ENCODE measurements at regions of chr20 and their contacts with region 1.

Region 1: DNA sequence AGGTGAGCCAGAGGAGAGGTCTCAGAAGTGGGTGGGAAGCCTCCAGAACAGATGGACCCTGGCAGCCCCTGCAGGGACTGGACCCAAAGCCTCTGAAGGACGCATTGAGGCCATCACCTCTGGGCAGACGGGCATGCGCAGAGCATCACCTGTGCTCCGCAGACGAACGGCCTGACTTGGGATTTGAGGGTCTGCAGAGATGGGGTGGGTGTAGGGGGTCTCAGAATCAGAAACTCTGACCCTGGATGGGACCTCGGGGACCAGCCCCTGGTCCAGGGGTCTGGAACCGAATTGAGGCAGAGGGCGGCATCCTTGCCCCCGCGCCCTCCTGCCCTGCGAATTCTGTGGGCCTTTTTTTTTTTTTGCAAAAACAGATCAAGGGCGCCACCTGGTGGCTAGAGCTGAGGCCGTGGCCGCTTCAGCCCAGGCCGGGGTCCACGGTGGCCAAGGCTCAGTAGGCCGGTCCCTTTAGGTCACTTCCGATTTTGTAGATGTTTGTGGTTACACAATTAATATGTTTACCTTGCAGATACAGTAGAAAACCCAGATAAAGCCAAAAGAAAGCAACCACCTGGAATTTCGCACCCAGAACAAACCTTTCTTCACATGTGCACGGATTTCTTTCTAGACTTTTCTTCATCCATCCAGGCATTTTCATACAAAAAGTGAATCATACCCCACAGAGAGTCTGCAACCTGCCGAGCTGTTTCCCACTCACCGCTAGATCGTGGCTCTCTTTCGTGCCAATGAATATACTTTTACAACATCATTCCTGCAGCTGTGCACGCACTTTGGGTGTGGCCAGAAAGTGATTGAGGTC is 25.9 kb downstream of the ZBP1 start:
- DNase-seq: peak; percentile 47
- H3K4me3 ChIP-seq: no peak overlapping the region
- H3K27ac ChIP-seq: no peak overlapping the region
- H3K4me1 ChIP-seq: no peaks in the 10 kb centered on the region
- H3K27me3 ChIP-seq: no peaks in the 10 kb centered on the region; the same call in 1 of the 2 replicates

Region 2: DNA sequence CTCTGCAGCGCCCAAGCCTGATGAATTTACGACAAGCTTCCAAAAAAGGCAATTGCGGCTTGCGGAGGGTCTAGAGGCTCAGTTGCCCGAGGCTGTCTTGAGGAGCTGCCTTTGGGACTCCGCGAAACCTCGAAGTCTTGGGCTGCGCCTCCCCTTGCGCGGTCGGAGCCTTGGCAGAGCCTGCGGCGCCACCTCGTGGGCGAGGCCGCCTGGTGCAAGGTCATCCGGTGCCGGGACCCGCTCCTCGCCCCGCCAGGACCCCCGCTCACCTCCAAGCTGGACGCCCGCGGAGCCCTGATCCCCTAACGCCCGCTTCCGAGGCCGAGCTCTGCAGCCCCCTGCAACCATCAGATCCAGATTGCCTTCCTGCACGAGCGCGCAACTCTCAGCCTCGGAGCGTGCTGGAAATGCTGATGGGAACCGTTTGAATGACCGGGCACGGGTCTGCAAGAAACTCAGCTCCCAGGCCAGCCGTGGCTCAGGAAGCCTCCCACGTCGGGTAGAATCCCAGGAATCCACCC is 1250.4 kb before region 1 on chr20:
- in situ Hi-C with region 1: no loop called
- DNase-seq: peak; percentile 75
- H3K4me3 ChIP-seq: peak overlapping the region; percentile 61
- H3K27ac ChIP-seq: no peak overlapping the region
- H3K4me1 ChIP-seq: no peaks in the 10 kb centered on the region
- H3K27me3 ChIP-seq: peaks cover 33% of the 10 kb centered on the region

Region 3: DNA sequence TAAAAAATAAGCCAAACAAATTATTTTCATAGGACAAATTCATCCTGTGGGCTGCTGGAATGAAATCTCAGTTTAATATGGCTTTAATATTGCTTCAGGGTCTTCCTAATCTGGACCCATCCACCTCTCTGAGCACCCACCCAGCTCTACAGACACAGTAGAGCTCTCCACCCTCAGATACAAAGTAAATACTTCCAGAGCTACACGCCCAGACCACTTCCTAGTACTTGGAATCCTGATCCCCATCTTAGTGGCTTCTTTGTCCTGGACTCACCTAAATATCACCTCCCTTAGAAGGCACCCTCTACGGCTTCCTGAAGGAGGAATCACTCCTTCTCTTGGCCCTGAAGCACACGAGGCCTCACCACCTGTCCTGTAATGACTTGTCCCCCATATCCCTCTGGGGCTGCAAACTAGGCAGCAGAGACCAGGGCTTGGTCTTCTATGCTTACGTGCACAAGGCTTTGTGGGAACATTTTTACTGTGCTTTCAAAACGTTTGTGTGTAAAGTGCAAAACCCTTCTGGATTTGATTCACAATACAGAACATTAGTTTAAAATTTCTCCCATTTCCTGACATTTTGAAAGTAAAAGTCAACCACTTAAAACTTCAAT is 71.8 kb before region 1 on chr20:
- in situ Hi-C with region 1: loop called (anchors 5 kb)
- DNase-seq: no peak
- H3K4me3 ChIP-seq: no peak overlapping the region
- H3K27ac ChIP-seq: no peak overlapping the region
- H3K4me1 ChIP-seq: no peaks in the 10 kb centered on the region
- H3K27me3 ChIP-seq: peaks cover 36% of the 10 kb centered on the region

Region 4: GRCh38 chr20:58293453-58293852 is 699.2 kb after region 1 on chr20:
- in situ Hi-C with region 1: no loop called
- DNase-seq: no peak
- H3K4me3 ChIP-seq: no peak overlapping the region
- H3K27ac ChIP-seq: no peak overlapping the region
- H3K4me1 ChIP-seq: no peaks in the 10 kb centered on the region
- H3K27me3 ChIP-seq: no peaks in the 10 kb centered on the region